Heart right ventricle (tissue), 16 donors: ENCODE measurements at regions of chr2 and their contacts with region 1.

Region 1: GRCh38 chr2:96145036-96145847 is at the start of gene DUSP2:
- DNase-seq: peak; percentile 64 to 75
- ATAC-seq: peak; percentile 82 to 88 (median 86)
- H3K4me3 ChIP-seq: peak within 1 kb of the TSS; percentile 32 to 68 (median 56)
- H3K27ac ChIP-seq: peak within 1 kb of the TSS in 9 of 10 donors; percentile 11 to 89 (median 52)
- H3K4me1 ChIP-seq: peaks cover 0 to 62% (median 39%) of the 10 kb centered on the region in 9 donors
- H3K27me3 ChIP-seq: peaks cover 0 to 5% (median 0%) of the 10 kb centered on the region in 7 donors
- CTCF ChIP-seq: peak in 2 of 9 donors; percentile 4 to 23
- total RNA-seq, gene DUSP2: 0.61 to 6.8 (median 2.5) TPM

Region 2: DNA sequence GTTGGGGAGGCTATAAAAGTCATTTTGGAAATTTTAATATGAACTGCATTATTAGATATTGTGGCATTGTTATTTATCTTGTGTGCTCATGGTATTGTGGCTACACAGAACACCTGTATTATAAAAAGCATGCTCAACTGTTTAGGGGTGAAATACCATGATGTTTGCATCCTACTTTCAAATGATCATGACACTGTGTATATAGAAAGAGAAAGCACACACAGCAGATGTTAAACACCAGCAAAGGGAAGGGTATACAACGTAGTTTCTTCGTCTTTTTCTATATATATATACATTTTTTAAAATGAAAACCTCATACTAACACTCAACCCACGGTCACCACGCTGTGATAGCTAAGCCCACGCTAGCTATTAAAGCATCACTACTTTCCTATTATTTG is 36.3 kb after region 1 on chr2:
- intact Hi-C with region 1: no loop called
- DNase-seq: no peak
- ATAC-seq: no peak
- H3K4me3 ChIP-seq: no peak overlapping the region
- H3K27ac ChIP-seq: no peak overlapping the region
- H3K4me1 ChIP-seq: peaks cover 0 to 29% (median 5%) of the 10 kb centered on the region in 9 donors
- H3K27me3 ChIP-seq: no peaks in the 10 kb centered on the region
- CTCF ChIP-seq: no peak

Region 3: GRCh38 chr2:96195410-96196066 is 50.3 kb after region 1 on chr2:
- intact Hi-C with region 1: loop called in 1 of 10 experiments (anchors 10 kb)
- DNase-seq: no peak
- ATAC-seq: no peak
- H3K4me3 ChIP-seq: no peak overlapping the region
- H3K27ac ChIP-seq: peak overlapping the region in 3 of 10 donors; percentile 1 to 45 (median 24)
- H3K4me1 ChIP-seq: peaks cover 0 to 86% (median 44%) of the 10 kb centered on the region in 9 donors
- H3K27me3 ChIP-seq: no peaks in the 10 kb centered on the region
- CTCF ChIP-seq: peak in 1 of 9 donors; percentile 13

Region 4: GRCh38 chr2:96208143-96209010 is 63.1 kb after region 1 on chr2 and contains the start of gene STARD7:
- intact Hi-C with region 1: loop called in 1 of 10 experiments (anchors 5 kb)
- DNase-seq: peak; percentile 99
- ATAC-seq: peak; percentile 96 to 97 (median 96)
- H3K4me3 ChIP-seq: peak within 1 kb of the TSS; percentile 63 to 100 (median 95)
- H3K27ac ChIP-seq: peak within 1 kb of the TSS; percentile 91 to 99 (median 97)
- H3K4me1 ChIP-seq: peaks cover 12 to 58% (median 54%) of the 10 kb centered on the region in 9 donors
- H3K27me3 ChIP-seq: no peaks in the 10 kb centered on the region
- CTCF ChIP-seq: peak in 7 of 9 donors; percentile 10 to 39 (median 31)
- total RNA-seq, gene STARD7: 138 to 397 (median 191) TPM

Region 5: GRCh38 chr2:96514521-96514920 is 369.3 kb after region 1 on chr2:
- intact Hi-C with region 1: loop called in 2 of 10 experiments (anchors 5 to 10 kb)
- DNase-seq: no peak
- ATAC-seq: no peak
- H3K4me3 ChIP-seq: no peak overlapping the region
- H3K27ac ChIP-seq: no peak overlapping the region
- H3K4me1 ChIP-seq: peaks cover 0 to 2% (median 0%) of the 10 kb centered on the region in 9 donors
- H3K27me3 ChIP-seq: no peaks in the 10 kb centered on the region
- CTCF ChIP-seq: no peak